MCF 10A (cell line): ENCODE measurements at regions of chr6 and their contacts with region 1.

Region 1: DNA sequence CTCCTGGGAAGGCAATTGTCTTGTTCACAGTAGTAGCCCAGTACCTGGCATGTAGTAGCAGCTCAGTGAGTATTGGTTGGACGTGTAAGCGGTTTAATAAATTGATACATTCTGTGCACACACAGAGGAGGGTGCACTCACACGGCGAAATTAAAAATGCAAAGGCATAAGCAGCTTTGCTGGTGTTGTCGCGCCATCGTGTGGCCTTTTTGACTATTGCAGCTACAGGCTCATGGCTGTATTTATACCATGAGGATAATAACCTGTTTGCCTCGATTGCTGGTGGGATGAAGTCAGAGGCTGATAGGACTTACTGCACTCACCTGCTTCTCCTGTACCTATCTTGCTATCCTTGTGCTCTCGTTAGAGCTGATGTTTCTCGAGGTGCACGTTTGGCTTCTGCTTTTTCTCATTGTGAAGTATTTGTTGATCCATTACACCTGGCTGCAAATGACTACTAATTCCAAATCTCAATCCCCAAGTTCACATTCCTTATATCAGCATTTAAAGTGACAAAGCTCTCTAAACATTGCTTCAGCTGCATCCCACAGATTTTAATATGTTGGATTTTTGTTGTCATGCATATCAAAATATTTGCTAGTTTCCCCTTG is 61.5 kb downstream of the TBXT start:
- DNase-seq: peak; percentile 75
- H3K4me3 Mint-ChIP-seq: no peak overlapping the region
- H3K27ac Mint-ChIP-seq: no peak overlapping the region
- H3K4me1 Mint-ChIP-seq: peaks cover 13% of the 10 kb centered on the region
- H3K27me3 Mint-ChIP-seq: no peaks in the 10 kb centered on the region
- CTCF ChIP-seq: peak; percentile 92

Region 2: DNA sequence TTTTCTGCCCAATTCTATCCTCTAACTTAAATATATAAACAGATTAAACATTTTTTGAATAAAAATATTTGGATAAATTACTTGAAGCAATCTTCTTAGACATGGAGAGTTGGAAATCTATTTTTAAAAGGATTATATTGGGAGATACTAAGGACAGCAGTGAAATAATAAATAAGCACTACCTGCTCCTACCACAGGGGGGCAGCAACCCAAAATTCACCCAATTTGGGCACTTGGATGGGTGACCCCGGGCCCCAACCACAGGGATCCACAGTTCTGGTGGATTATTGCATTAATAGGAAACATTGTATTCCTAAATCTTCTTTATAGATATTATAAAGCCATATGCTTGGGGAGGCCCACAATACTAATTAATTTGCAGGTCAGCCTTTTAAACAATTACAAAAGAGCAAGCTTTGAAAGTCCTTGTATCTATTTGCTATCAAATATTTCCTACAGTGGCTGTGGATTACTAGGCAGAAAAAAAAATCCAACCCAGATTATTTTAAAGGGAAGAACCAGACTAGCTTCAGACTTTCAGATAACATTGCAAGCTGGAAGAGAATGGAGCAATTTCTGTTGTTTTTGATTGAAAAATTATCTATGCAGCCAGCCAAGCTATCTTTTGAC is 376.8 kb before region 1 on chr6:
- CTCF ChIA-PET with region 1: interaction called, 20 read pairs
- POLR2A ChIA-PET with region 1: no interaction called
- intact Hi-C with region 1: loop called (anchors 1 kb)
- DNase-seq: peak; percentile 54
- H3K4me3 Mint-ChIP-seq: no peak overlapping the region
- H3K27ac Mint-ChIP-seq: no peak overlapping the region
- H3K4me1 Mint-ChIP-seq: no peaks in the 10 kb centered on the region
- H3K27me3 Mint-ChIP-seq: no peaks in the 10 kb centered on the region
- CTCF ChIP-seq: peak; percentile 60

Region 3: GRCh38 chr6:165850434-165851019 is 255.7 kb before region 1 on chr6:
- CTCF ChIA-PET with region 1: interaction called, 18 read pairs
- POLR2A ChIA-PET with region 1: interaction called, 4 read pairs
- intact Hi-C with region 1: loop called (anchors 1 kb)
- DNase-seq: peak; percentile 57
- H3K4me3 Mint-ChIP-seq: no peak overlapping the region
- H3K27ac Mint-ChIP-seq: no peak overlapping the region
- H3K4me1 Mint-ChIP-seq: no peaks in the 10 kb centered on the region
- H3K27me3 Mint-ChIP-seq: no peaks in the 10 kb centered on the region
- CTCF ChIP-seq: peak; percentile 85

Region 4: GRCh38 chr6:165884813-165885765 is 221.1 kb before region 1 on chr6:
- CTCF ChIA-PET with region 1: interaction called, 43 read pairs
- POLR2A ChIA-PET with region 1: no interaction called
- intact Hi-C with region 1: loop called (anchors 1 kb)
- DNase-seq: peak; percentile 67
- H3K4me3 Mint-ChIP-seq: no peak overlapping the region
- H3K27ac Mint-ChIP-seq: no peak overlapping the region
- H3K4me1 Mint-ChIP-seq: no peaks in the 10 kb centered on the region
- H3K27me3 Mint-ChIP-seq: no peaks in the 10 kb centered on the region
- CTCF ChIP-seq: peak; percentile 88

Region 5: GRCh38 chr6:165987483-165988301 is 118.5 kb before region 1 on chr6:
- CTCF ChIA-PET with region 1: interaction called, 6 read pairs
- POLR2A ChIA-PET with region 1: no interaction called
- intact Hi-C with region 1: loop called (anchors 10 kb)
- DNase-seq: peak; percentile 87
- H3K4me3 Mint-ChIP-seq: peak overlapping the region; percentile 74
- H3K27ac Mint-ChIP-seq: no peak overlapping the region
- H3K4me1 Mint-ChIP-seq: peaks cover 13% of the 10 kb centered on the region
- H3K27me3 Mint-ChIP-seq: peaks cover 16% of the 10 kb centered on the region
- CTCF ChIP-seq: no peak

Region 6: DNA sequence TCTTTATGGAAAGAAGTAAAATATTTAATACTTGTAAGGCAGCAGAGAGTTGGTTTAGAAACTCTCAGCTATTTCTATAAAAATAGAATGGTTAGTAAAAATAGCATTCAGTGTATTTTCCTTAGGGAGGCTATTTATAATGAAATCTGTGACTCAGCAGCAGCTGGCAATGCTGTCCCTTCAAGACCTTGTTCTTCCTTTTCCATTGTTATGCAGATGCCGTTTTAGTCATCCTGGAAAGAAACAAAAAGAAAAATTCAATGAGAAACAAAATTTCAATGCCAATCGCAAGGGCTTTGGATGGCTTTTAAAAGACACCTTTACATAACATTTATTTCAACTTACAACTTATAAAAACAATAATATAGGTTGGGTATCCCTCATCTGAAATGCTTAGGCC is 259.0 kb after region 1 on chr6:
- CTCF ChIA-PET with region 1: no interaction called
- POLR2A ChIA-PET with region 1: no interaction called
- intact Hi-C with region 1: no loop called
- DNase-seq: no peak
- H3K4me3 Mint-ChIP-seq: no peak overlapping the region
- H3K27ac Mint-ChIP-seq: no peak overlapping the region
- H3K4me1 Mint-ChIP-seq: peaks cover 10% of the 10 kb centered on the region
- H3K27me3 Mint-ChIP-seq: no peaks in the 10 kb centered on the region
- CTCF ChIP-seq: no peak